ENCODE measurements at regions of chr18 and their contacts with region 1.

Region 1: GRCh38 chr18:36179562-36180355 is 7.5 kb upstream of the MOCOS start:
- DNase-seq: no peak
- ATAC-seq: no peak
- H3K4me3 ChIP-seq: no peak overlapping the region
- H3K27ac ChIP-seq: no peak overlapping the region
- H3K4me1 ChIP-seq: no peaks in the 10 kb centered on the region
- H3K27me3 ChIP-seq: no peaks in the 10 kb centered on the region
- CTCF ChIP-seq: no peak

Region 2: GRCh38 chr18:36284671-36285295 is 105.0 kb after region 1 on chr18:
- CTCF ChIA-PET with region 1: no interaction called
- POLR2A ChIA-PET with region 1: no interaction called
- intact Hi-C with region 1: loop called (anchors 10 kb)
- DNase-seq: peak; percentile 55
- ATAC-seq: peak; percentile 27; the same call in 1 of the 2 replicates
- H3K4me3 ChIP-seq: no peak overlapping the region
- H3K27ac ChIP-seq: no peak overlapping the region
- H3K4me1 ChIP-seq: no peaks in the 10 kb centered on the region
- H3K27me3 ChIP-seq: no peaks in the 10 kb centered on the region
- CTCF ChIP-seq: peak; percentile 74